Dorsolateral prefrontal cortex (tissue), 120 donors: ENCODE measurements at regions of chr15 and their contacts with region 1.

Region 1: DNA sequence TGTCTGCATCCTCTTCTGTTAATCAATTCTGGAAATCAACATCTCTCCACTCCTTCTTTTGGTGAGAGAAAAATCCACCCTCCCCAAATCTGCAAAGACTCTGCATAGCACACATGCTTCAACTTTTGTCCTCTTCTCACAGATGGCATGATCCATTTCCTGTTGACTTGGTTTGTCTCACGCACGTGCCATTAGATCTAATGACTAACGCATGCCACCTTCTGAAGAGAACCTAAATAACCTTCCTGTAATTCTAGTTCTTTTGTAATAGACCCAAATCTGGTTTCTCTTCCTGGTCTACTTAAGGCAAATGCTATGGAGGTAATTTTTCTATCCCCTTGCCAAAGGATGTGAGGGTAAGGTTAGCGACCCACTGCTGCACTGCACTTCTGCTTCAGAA is 51.0 kb upstream of the ATOSA start:
- DNase-seq: no peak
- H3K4me3 ChIP-seq: no peak overlapping the region
- H3K27ac ChIP-seq: no peak overlapping the region
- H3K27me3 ChIP-seq: peaks cover 0 to 5% (median 0%) of the 10 kb centered on the region in 45 donors
- CTCF ChIP-seq: no peak

Region 2: DNA sequence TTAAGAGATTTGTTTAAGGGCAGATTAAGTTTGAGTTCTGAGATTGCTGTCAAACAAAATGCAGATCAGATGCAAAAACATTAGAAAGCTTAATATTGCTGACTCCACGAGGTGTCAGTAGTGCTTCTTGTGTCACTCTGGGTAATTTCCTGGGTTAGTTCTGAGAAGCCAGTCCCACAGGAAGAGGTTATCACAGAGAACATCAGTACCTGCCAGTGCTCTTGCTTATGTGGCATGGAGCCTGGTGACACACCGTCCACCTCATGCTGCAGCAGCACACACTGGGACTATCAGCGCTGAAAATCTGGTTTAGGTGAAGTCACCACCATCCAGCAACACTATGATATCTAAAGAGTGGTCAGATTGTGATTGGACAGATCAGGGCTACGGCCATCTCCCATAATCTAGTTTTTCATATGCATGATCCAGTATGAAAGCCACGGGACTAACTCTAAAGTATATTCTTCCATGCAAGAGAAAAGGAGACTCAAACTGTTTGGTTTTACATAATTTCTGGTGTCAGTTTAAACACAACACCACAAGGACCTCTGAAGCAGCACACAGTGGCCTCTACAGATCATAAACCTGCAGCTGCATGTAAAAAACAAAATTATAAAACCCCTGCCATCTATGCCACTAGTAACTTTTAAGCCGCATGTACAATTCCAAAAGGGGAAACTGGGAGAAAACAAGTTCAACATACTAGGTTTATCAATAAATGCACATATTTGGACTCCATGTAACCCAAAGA is 398.5 kb before region 1 on chr15:
- intact Hi-C with region 1: loop called in 1 of 2 experiments (anchors 5 kb)
- DNase-seq: peak in 1 of 10 donors; percentile 41
- H3K4me3 ChIP-seq: no peak overlapping the region
- H3K27ac ChIP-seq: peak overlapping the region in 46 of 59 donors; percentile 0 to 71 (median 40)
- H3K27me3 ChIP-seq: no peaks in the 10 kb centered on the region
- CTCF ChIP-seq: peak in 54 of 56 donors; percentile 14 to 80 (median 52)

Region 3: GRCh38 chr15:52523192-52523591 is 207.0 kb before region 1 on chr15:
- intact Hi-C with region 1: loop called in 1 of 2 experiments (anchors 5 kb)
- DNase-seq: no peak
- H3K4me3 ChIP-seq: no peak overlapping the region
- H3K27ac ChIP-seq: peak overlapping the region in 12 of 59 donors; percentile 3 to 39 (median 20)
- H3K27me3 ChIP-seq: no peaks in the 10 kb centered on the region
- CTCF ChIP-seq: no peak

Region 4: GRCh38 chr15:52695183-52695582 is 35.0 kb before region 1 on chr15:
- intact Hi-C with region 1: loop called in 1 of 2 experiments (anchors 2 kb)
- DNase-seq: no peak
- H3K4me3 ChIP-seq: no peak overlapping the region
- H3K27ac ChIP-seq: no peak overlapping the region
- H3K27me3 ChIP-seq: peaks cover 0 to 4% (median 0%) of the 10 kb centered on the region in 45 donors
- CTCF ChIP-seq: no peak

Region 5: GRCh38 chr15:52943746-52944145 is 213.6 kb after region 1 on chr15:
- intact Hi-C with region 1: no loop called
- DNase-seq: no peak
- H3K4me3 ChIP-seq: no peak overlapping the region
- H3K27ac ChIP-seq: no peak overlapping the region
- H3K27me3 ChIP-seq: peaks cover 0 to 14% (median 0%) of the 10 kb centered on the region in 45 donors
- CTCF ChIP-seq: no peak

Region 6: GRCh38 chr15:53197426-53197839 is 467.3 kb after region 1 on chr15:
- intact Hi-C with region 1: no loop called
- DNase-seq: peak; percentile 41 to 81 (median 60)
- H3K4me3 ChIP-seq: peak overlapping the region in 53 of 59 donors; percentile 0 to 62 (median 37)
- H3K27ac ChIP-seq: no peak overlapping the region
- H3K27me3 ChIP-seq: peaks cover 0 to 36% (median 0%) of the 10 kb centered on the region in 45 donors
- CTCF ChIP-seq: peak; percentile 59 to 94 (median 87)